CD4-positive, alpha-beta T cell (primary cell): ENCODE measurements at regions of chr22 and their contacts with region 1.

Region 1: GRCh38 chr22:23970816-23971486 is 3.3 kb downstream of the DDT start:
- DNase-seq: peak in 1 of 14 experiments; percentile 16
- ATAC-seq: no peak
- H3K4me3 ChIP-seq: no peak overlapping the region
- H3K4me3 Mint-ChIP-seq: peak overlapping the region; percentile 73
- H3K27ac ChIP-seq: no peak overlapping the region
- H3K27ac Mint-ChIP-seq: peak overlapping the region; percentile 0
- H3K4me1 ChIP-seq: peaks cover 19% of the 10 kb centered on the region
- H3K4me1 Mint-ChIP-seq: peaks cover 15% of the 10 kb centered on the region
- H3K27me3 ChIP-seq: no peaks in the 10 kb centered on the region
- H3K27me3 Mint-ChIP-seq: no peaks in the 10 kb centered on the region
- CTCF ChIP-seq: no peak

Region 2: GRCh38 chr22:23922651-23923320 is 48.2 kb before region 1 on chr22:
- CTCF ChIA-PET with region 1: no interaction called
- POLR2A ChIA-PET with region 1: no interaction called
- intact Hi-C with region 1: loop called (anchors 5 to 10 kb)
- DNase-seq: no peak
- ATAC-seq: no peak
- H3K4me3 ChIP-seq: no peak overlapping the region
- H3K4me3 Mint-ChIP-seq: no peak overlapping the region
- H3K27ac ChIP-seq: no peak overlapping the region
- H3K27ac Mint-ChIP-seq: peak overlapping the region; percentile 11
- H3K4me1 ChIP-seq: no peaks in the 10 kb centered on the region
- H3K4me1 Mint-ChIP-seq: no peaks in the 10 kb centered on the region
- H3K27me3 ChIP-seq: no peaks in the 10 kb centered on the region
- H3K27me3 Mint-ChIP-seq: no peaks in the 10 kb centered on the region
- CTCF ChIP-seq: no peak

Region 3: GRCh38 chr22:23928187-23928586 is 42.8 kb before region 1 on chr22:
- CTCF ChIA-PET with region 1: no interaction called
- POLR2A ChIA-PET with region 1: no interaction called
- intact Hi-C with region 1: loop called (anchors 5 to 10 kb)
- DNase-seq: no peak
- ATAC-seq: no peak
- H3K4me3 ChIP-seq: no peak overlapping the region
- H3K4me3 Mint-ChIP-seq: no peak overlapping the region
- H3K27ac ChIP-seq: no peak overlapping the region
- H3K27ac Mint-ChIP-seq: no peak overlapping the region
- H3K4me1 ChIP-seq: no peaks in the 10 kb centered on the region
- H3K4me1 Mint-ChIP-seq: no peaks in the 10 kb centered on the region
- H3K27me3 ChIP-seq: no peaks in the 10 kb centered on the region
- H3K27me3 Mint-ChIP-seq: no peaks in the 10 kb centered on the region
- CTCF ChIP-seq: no peak

Region 4: DNA sequence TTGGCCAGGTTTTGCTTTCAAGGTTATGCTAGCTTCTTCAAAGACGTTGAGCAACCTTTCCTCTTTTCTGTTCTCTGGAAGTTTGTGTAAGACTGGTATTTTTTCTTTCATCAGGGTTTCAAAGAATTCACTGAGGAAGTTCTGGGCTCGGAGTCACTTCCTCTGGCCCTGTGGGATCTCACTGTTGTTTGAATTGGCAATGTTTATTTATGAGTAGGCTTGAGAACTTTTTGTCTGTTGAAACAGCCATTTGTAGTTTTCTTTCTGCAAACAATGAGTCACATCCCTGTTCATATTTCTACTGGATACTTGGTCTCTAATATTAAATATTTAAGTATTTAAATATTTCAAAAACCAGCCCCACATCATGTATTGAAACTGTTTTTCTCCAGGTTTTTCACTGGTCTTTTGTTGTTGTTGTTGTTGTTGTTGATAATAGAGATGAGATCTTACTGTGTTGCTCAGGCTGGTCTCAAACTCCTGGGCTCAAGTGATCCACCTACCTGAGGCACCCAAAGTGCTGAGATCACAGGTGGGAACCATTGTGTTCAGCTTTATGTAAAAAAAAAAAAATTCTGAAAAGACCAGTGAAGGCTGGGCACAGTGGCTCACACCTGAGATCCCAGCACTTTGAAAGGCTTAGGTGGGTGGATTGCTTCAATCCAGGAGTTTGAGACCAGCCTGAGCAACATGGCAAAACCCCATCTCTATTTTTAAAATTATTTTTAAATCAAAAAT is 237.2 kb after region 1 on chr22:
- CTCF ChIA-PET with region 1: no interaction called
- POLR2A ChIA-PET with region 1: no interaction called
- intact Hi-C with region 1: no loop called
- DNase-seq: peak in 4 of 14 experiments; percentile 5 to 67 (median 36)
- ATAC-seq: no peak
- H3K4me3 ChIP-seq: no peak overlapping the region
- H3K4me3 Mint-ChIP-seq: no peak overlapping the region
- H3K27ac ChIP-seq: no peak overlapping the region
- H3K27ac Mint-ChIP-seq: peak overlapping the region; percentile 61
- H3K4me1 ChIP-seq: peaks cover 15% of the 10 kb centered on the region
- H3K4me1 Mint-ChIP-seq: peaks cover 18% of the 10 kb centered on the region
- H3K27me3 ChIP-seq: no peaks in the 10 kb centered on the region
- H3K27me3 Mint-ChIP-seq: no peaks in the 10 kb centered on the region
- CTCF ChIP-seq: no peak